CD4-positive, alpha-beta memory T cell (primary cell): ENCODE measurements at regions of chrX and their contacts with region 1.

Region 1: DNA sequence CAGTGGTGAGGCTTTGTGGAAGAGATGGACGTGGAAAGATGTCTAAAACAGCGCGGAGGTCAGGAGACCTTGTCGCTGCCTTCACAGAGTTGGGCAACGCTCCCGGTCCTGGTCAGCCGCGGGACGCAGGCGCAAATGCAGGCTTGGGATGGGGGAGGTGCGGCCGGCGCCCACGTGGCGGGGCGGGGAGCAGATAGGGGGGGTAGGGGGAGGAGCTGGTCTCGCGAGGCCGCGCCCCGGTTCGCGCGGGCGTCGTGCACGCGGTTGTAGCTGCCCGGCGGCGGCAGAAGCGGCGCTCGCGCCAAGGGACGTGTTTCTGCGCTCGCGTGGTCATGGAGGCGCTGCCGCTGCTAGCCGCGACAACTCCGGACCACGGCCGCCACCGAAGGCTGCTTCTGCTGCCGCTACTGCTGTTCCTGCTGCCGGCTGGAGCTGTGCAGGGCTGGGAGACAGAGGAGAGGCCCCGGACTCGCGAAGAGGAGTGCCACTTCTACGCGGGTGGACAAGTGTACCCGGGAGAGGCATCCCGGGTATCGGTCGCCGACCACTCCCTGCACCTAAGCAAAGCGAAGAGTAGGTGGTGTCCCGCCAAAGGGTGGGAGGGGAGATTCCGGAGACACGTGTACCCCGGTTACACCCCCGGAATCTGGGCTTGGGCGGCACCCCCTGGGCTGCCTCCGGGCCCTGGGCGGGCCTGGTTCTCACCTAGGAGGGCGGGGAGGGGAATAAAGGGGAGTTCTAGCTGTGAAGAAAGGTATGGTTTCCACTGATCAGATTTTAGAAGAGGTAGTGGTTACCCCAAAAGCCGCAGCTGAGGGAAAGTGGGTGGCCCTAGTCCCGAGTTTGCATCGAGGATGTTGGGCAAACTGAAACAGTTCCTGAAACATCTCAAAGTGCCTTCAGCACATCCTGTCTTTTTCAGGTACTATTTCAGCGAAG is at the start of gene PRDX4:
- DNase-seq: peak; percentile 60 to 75 (median 67)
- H3K4me3 ChIP-seq: peak within 1 kb of the TSS in 1 of 2 donors; percentile 52
- H3K4me3 Mint-ChIP-seq: peak within 1 kb of the TSS; percentile 86 to 94 (median 88)
- H3K27ac ChIP-seq: peak within 1 kb of the TSS; percentile 85
- H3K27ac Mint-ChIP-seq: peak within 1 kb of the TSS; percentile 85 to 94 (median 91)
- H3K4me1 ChIP-seq: peaks cover 17% of the 10 kb centered on the region
- H3K4me1 Mint-ChIP-seq: peaks cover 14 to 29% (median 17%) of the 10 kb centered on the region in 4 donors
- H3K27me3 ChIP-seq: no peaks in the 10 kb centered on the region
- H3K27me3 Mint-ChIP-seq: no peaks in the 10 kb centered on the region
- total RNA-seq, gene PRDX4: 13.1 to 13.4 TPM

Region 2: DNA sequence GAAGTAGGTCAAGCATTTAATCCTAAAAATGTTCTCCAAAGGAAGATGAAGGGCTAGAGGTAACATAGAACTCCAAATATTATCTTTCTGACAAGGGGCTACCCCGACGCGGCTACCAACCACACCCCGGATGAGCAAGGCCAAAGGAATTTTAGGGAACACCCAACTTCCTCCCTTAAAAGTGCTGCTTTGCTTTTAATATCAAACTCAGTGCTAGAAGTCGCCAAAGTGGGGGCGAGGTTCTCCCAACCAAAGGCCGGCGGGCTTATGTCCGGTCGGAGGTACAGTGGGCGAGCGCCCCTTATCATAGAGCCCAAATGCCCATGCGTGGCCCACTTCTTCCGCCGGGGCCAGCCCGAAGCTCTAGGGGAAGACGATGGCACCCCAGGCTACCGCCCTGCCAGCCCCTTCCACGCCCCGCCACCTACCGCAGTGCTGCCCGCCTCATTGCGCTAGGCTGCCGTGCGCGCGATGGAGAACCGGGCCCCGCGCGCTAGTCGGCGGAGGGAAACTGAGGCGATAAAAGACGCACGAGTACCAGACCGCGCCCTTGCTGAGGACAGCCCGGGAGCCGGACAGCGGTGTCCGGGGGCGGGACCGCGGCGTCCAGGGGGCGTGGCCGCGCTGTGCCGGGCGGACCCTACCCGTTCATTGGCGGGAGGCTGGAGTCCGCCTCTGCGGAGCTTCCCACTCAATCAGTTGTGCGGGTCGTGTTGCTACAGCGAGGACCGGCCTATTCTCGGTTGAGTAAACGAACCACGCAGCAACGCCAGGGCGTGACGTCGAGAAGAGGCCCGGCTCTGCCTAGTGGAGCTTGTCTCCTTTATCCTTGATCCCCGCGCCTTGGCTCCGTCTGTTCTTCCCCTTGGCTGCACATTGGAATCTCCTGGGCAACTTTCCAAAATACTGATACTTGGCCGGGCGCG is 75.5 kb after region 1 on chrX and contains the start of gene ACOT9:
- CTCF ChIA-PET with region 1: interaction called, 4 read pairs
- POLR2A ChIA-PET with region 1: interaction called, 7 read pairs
- intact Hi-C with region 1: loop called (anchors 5 kb)
- DNase-seq: peak; percentile 69 to 80 (median 76)
- H3K4me3 ChIP-seq: peak within 1 kb of the TSS; percentile 45 to 77
- H3K4me3 Mint-ChIP-seq: peak within 1 kb of the TSS; percentile 87 to 94 (median 90)
- H3K27ac ChIP-seq: peak within 1 kb of the TSS; percentile 58
- H3K27ac Mint-ChIP-seq: peak within 1 kb of the TSS; percentile 64 to 96 (median 91)
- H3K4me1 ChIP-seq: peaks cover 35% of the 10 kb centered on the region
- H3K4me1 Mint-ChIP-seq: peaks cover 11 to 42% (median 28%) of the 10 kb centered on the region in 4 donors
- H3K27me3 ChIP-seq: no peaks in the 10 kb centered on the region
- H3K27me3 Mint-ChIP-seq: no peaks in the 10 kb centered on the region
- total RNA-seq, gene ACOT9: 21.2 to 25.2 TPM